AG04450 (cell line): ENCODE measurements at regions of chr17 and their contacts with region 1.

Region 1: GRCh38 chr17:29931231-29931932 is 1.4 kb upstream of the SSH2 start:
- DNase-seq: peak; percentile 51
- H3K4me3 ChIP-seq: no peak overlapping the region; the same call in 1 of the 2 replicates
- H3K27ac ChIP-seq: no peak overlapping the region
- H3K27me3 ChIP-seq: no peaks in the 10 kb centered on the region
- CTCF ChIP-seq: peak; percentile 96

Region 2: DNA sequence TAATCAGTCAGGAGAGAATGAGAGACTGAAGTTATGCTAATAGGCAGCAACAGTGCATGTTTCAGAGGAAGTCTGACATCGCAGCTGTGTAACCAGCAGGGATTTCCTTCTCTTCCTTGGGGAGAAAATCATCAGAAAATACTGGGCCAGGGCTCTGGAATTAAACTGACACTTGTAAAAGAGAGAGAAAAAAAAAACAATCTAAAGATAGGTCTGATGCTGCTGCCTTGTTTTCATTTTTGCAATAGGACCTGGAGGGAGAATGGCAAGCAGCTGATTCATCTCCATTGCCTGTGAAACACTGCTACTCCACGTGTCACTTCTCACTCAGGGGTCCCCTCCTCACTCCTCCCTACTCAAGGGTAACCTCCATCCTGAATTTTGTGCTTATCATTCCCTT is 291.0 kb before region 1 on chr17:
- CTCF ChIA-PET with region 1: interaction called, 18 read pairs
- POLR2A ChIA-PET with region 1: no interaction called
- DNase-seq: peak; percentile 27
- H3K4me3 ChIP-seq: no peak overlapping the region
- H3K27ac ChIP-seq: peak overlapping the region; percentile 68
- H3K27me3 ChIP-seq: no peaks in the 10 kb centered on the region
- CTCF ChIP-seq: no peak

Region 3: GRCh38 chr17:29820425-29820824 is 111.0 kb before region 1 on chr17:
- CTCF ChIA-PET with region 1: interaction called, 13 read pairs
- POLR2A ChIA-PET with region 1: no interaction called
- DNase-seq: no peak
- H3K4me3 ChIP-seq: no peak overlapping the region
- H3K27ac ChIP-seq: no peak overlapping the region
- H3K27me3 ChIP-seq: no peaks in the 10 kb centered on the region
- CTCF ChIP-seq: no peak

Region 4: GRCh38 chr17:29909236-29910003 is 22.0 kb before region 1 on chr17:
- CTCF ChIA-PET with region 1: interaction called, 35 read pairs
- POLR2A ChIA-PET with region 1: no interaction called
- DNase-seq: no peak
- H3K4me3 ChIP-seq: no peak overlapping the region
- H3K27ac ChIP-seq: no peak overlapping the region
- H3K27me3 ChIP-seq: no peaks in the 10 kb centered on the region
- CTCF ChIP-seq: no peak

Region 5: GRCh38 chr17:30021708-30022317 is 90.4 kb after region 1 on chr17:
- CTCF ChIA-PET with region 1: interaction called, 20 read pairs
- POLR2A ChIA-PET with region 1: no interaction called
- DNase-seq: peak; percentile 13
- H3K4me3 ChIP-seq: no peak overlapping the region
- H3K27ac ChIP-seq: no peak overlapping the region
- H3K27me3 ChIP-seq: no peaks in the 10 kb centered on the region
- CTCF ChIP-seq: peak; percentile 87